AG04449 (cell line): ENCODE measurements at regions of chr20 and their contacts with region 1.

Region 1: DNA sequence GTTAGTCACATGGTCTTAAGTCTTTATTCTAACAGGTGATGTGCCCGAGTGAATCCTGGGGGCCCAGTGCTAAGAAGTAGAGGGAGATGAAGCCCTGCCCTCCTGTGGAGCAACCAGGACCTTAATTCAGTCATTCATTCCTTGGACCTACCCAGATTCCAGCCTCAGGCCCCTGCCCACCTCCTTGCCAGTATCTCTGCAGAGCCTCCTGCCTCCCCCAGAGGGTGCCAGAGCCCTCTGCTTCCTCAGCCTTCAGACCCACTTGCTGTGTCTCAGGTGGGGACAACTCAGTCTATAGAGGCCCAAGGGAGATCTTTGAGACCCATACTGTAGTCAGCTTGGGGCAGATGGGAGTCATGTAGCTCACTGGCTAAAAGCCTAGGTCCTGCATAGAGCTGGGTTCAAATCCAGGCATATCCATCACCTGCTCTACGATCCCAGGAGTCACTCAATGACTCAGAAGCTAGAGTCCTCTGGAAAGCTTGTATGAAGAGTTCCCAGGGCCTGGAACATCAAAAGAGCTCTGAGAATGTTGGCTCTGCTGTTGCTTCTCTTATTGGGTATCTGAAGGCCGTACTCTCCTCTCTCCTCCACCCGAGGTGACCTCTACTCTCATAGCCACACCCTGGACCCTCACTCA is 3.9 kb upstream of the SIGLEC1 start:
- DNase-seq: no peak
- H3K4me3 ChIP-seq: no peak overlapping the region
- CTCF ChIP-seq: peak; percentile 86

Region 2: DNA sequence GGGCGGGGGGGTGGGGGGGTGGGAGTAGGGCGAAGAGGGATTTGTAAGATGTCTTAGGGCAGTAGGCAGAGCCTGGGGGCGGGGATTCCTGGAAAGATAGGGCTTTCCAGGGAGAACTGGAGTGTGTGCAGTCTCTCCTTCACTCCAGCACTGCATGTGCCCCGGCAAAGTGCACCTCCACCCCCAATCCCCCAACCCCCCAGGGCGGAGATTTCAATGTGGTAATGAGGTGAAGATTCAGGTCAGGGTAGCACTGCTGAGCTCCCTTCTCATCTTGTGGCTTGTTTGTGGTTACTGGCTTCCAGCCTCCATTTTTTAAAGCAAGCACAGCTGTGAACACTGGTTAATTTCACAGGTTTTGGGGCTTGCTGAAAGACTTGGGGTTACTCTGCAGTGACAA is 894.2 kb before region 1 on chr20:
- CTCF ChIA-PET with region 1: no interaction called
- POLR2A ChIA-PET with region 1: no interaction called
- DNase-seq: no peak
- H3K4me3 ChIP-seq: no peak overlapping the region
- CTCF ChIP-seq: no peak

Region 3: GRCh38 chr20:3494223-3494622 is 222.1 kb before region 1 on chr20:
- CTCF ChIA-PET with region 1: no interaction called
- POLR2A ChIA-PET with region 1: no interaction called
- DNase-seq: no peak
- H3K4me3 ChIP-seq: no peak overlapping the region
- CTCF ChIP-seq: no peak

Region 4: GRCh38 chr20:3727401-3728021 is 11.2 kb after region 1 on chr20:
- CTCF ChIA-PET with region 1: interaction called, 41 read pairs
- POLR2A ChIA-PET with region 1: no interaction called
- DNase-seq: peak; percentile 10
- H3K4me3 ChIP-seq: peak overlapping the region; percentile 19
- CTCF ChIP-seq: no peak

Region 5: DNA sequence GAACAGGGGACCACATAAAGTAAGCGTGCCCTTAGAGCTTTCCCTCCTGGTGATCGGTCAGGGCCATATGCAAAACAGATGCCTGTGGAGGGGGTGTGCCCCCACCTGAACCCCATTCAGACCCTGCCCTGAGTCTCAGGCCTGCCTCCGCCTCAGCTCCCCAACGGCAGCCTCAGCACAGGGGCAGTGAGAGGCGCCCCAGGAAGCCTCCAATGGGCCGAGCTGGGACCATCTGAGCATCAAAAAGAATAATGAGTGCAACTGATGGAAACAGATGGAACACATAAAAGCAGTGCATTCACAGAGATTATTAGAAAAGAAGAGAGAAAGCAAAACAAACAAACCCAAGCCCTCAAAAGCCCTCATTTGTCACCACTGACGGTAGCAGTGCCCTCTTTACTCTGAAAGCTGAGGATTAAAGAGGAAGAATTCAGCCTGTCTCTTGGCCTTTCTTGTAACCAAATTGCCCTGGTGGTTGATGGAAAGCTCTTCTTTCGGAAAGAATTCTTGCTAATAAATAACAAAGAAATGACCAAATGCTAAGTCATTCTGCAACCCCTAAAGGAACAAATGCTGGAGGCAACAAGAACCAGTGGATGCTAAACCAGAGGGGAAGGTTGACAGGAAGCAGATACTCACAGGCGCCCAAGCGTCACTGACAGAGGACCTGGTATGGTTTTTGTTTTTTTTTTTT is 44.5 kb after region 1 on chr20:
- CTCF ChIA-PET with region 1: interaction called, 12 read pairs
- POLR2A ChIA-PET with region 1: no interaction called
- DNase-seq: no peak
- H3K4me3 ChIP-seq: no peak overlapping the region
- CTCF ChIP-seq: no peak

Region 6: DNA sequence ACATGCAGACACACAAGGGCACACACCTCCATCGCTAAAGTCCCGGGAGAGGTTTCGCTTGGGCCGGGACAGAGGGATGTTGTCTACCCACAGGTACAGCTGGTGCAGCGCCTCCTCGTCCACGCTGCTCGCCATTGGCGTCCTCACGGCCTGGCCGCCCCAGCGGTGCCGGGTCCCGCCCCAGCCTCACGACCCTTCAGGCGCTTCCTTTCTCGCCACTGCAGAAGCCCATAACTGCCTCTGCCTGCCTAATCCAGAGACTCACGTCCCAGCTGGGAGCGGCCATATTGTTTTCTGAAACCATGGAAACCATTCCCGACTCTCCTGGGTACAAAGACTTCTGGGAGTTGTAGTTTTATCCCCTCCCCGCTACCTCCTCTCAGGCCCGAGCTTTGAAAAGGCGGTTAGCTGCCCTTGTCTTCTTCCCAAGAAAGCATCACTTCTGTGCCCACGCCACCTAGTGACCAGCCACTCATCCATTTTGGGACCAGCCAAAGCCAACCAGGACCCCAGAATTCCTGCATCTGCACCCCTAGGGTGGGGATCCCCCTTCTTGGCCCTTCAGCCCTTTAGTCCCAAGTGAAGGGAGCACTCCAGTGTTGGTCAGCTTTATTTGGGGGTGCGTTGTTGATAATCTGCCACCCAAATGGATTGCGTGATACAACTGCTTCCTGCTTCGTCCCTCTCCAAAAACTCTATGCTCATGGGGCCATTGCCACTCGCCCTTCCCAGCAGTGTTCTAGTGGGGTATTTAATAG is 65.0 kb after region 1 on chr20 and contains the start of gene SPEF1:
- CTCF ChIA-PET with region 1: interaction called, 10 read pairs
- POLR2A ChIA-PET with region 1: no interaction called
- DNase-seq: peak; percentile 59
- H3K4me3 ChIP-seq: peak within 1 kb of the TSS; percentile 60
- CTCF ChIP-seq: peak; percentile 68

Region 7: DNA sequence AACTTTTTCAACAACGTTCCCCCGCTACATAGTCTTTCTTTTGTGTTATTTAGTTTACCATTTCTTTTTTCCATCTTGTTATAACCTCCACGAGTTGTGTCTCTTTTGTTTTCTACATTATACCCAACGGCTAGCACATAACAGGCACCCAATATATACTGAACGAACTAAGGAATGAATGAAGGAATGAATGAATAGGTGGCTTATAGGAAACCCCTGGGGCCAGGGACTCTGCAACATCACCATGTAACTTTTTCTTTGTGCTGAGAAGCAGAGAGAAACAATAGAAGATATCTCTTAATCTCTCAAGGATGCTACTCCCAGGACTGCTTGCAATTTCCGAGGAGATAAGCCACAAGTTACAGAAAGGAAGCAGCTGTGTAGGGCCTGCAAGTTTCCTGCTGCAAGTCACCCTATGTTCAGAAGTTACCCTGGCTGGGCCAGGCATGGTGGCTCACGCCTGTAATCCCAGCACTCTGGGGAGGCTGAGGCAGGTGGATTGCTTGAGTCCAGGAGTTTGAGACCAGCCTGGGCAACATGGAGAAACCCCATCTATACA is 122.9 kb after region 1 on chr20:
- CTCF ChIA-PET with region 1: no interaction called
- POLR2A ChIA-PET with region 1: no interaction called
- DNase-seq: no peak
- H3K4me3 ChIP-seq: no peak overlapping the region
- CTCF ChIP-seq: no peak

Region 8: GRCh38 chr20:3995067-3995748 is 278.9 kb after region 1 on chr20:
- CTCF ChIA-PET with region 1: no interaction called
- POLR2A ChIA-PET with region 1: no interaction called
- DNase-seq: peak; percentile 17
- H3K4me3 ChIP-seq: no peak overlapping the region
- CTCF ChIP-seq: no peak